A673 (cell line): ENCODE measurements at regions of chr5 and their contacts with region 1.

Region 1: DNA sequence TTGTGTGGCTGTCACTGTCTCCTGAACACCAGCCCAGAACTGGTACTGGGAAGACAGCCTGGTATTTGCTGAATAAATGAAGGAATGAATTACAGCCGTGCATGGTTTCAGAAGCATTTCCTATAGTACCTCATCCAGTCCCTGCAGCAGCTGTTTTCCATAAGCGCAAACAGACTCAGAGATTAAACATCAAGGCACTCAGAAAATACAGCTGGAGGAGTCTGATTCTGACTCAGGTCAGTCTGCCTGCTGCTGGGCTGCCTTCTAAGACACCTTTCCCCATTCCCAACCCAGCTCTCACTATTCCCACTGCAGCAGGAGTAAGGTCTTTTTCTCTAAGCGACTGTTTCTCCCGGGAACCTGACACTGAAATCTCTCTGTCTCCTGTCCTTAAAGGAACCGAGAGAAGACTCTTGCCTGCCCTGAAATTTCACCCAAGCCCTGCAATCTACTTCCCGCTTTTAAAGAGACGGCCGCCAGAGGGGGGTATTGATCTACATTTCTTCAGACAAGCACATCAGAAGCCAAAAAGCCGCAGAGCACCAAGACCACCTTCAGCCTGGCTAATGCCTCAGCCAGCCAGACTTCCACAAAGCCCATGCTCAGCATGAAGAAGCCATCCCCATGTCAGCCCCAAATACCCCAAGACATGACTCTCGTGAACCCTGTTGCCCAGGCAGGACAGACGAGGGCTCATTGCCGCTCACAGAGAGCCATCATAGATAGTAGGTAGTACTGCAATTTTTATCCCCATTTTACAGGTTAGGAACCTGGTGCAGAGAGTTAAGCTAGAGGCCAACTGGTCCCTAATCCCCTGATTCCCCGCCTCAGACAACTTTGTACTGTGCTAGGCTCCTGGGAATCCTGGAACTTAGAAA is 5.4 kb upstream of the FOXI1 start:
- DNase-seq: peak; percentile 86
- H3K4me3 ChIP-seq: no peak overlapping the region
- H3K27ac ChIP-seq: no peak overlapping the region
- H3K4me1 ChIP-seq: no peaks in the 10 kb centered on the region
- H3K27me3 ChIP-seq: no peaks in the 10 kb centered on the region
- CTCF ChIP-seq: peak; percentile 71

Region 2: GRCh38 chr5:170183816-170184687 is 83.7 kb after region 1 on chr5:
- CTCF ChIA-PET with region 1: no interaction called
- POLR2A ChIA-PET with region 1: no interaction called
- intact Hi-C with region 1: loop called (anchors 1 kb)
- DNase-seq: peak; percentile 66
- H3K4me3 ChIP-seq: no peak overlapping the region
- H3K27ac ChIP-seq: no peak overlapping the region
- H3K4me1 ChIP-seq: no peaks in the 10 kb centered on the region
- H3K27me3 ChIP-seq: no peaks in the 10 kb centered on the region
- CTCF ChIP-seq: peak; percentile 84